ENCODE measurements at regions of chr1 and their contacts with region 1.

Region 1: DNA sequence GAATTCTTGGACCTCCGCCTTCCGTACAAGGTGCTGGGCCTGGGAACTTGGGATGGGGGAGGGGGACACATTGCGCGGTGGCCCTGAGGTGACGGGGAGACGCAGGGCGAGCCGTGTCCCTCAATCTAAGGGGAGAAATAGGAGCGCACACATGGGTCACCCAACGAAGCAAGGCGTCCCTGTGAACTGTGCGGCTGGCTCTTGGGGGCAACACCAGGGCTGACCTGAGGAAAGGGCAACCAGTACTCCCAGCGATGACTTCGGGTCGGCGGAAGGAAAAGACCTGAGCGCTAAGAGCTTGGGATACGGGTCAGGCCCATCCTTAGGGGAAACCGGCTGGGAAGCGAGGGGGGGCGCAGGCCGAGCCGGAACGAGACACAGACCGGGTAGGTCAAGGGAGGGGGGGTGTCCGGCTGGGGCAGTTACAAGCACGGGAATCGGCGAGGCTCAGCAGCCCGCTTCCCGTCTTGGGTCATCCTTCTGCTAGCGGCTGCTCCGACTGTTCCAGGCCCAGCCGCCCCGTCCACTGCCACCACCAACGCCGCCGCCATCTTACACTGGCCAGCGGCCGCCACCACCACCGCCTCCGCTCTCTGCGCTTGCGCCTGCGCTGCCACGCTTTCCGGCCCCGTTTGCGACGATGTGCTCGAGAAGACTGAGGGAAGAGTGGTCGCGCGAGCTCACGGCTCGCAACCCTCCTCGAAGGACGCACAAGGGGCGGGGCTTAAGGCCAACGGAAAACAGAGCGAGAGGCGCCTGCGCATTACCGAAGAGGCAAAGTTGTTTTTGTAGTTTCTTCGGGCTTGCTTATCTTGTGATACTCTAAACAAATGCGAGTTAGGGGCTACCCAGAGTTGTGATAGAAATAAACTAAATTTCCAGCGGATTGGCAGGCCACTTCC is at the start of gene DCAF8:
- DNase-seq: peak; percentile 99
- H3K4me3 Mint-ChIP-seq: peak within 1 kb of the TSS; percentile 98
- H3K27ac Mint-ChIP-seq: peak within 1 kb of the TSS; percentile 100
- H3K4me1 Mint-ChIP-seq: peaks cover 49% of the 10 kb centered on the region
- H3K27me3 Mint-ChIP-seq: no peaks in the 10 kb centered on the region
- total RNA-seq, gene DCAF8: 218 to 226 TPM

Region 2: GRCh38 chr1:159009704-159010361 is 1252.3 kb before region 1 on chr1 and contains the start of gene IFI16:
- CTCF ChIA-PET with region 1: no interaction called
- intact Hi-C with region 1: loop called (anchors 5 kb)
- DNase-seq: peak; percentile 82
- H3K4me3 Mint-ChIP-seq: peak within 1 kb of the TSS; percentile 91
- H3K27ac Mint-ChIP-seq: peak within 1 kb of the TSS; percentile 99
- H3K4me1 Mint-ChIP-seq: peaks cover 39% of the 10 kb centered on the region
- H3K27me3 Mint-ChIP-seq: no peaks in the 10 kb centered on the region
- total RNA-seq, gene IFI16: 287 to 288 TPM

Region 3: DNA sequence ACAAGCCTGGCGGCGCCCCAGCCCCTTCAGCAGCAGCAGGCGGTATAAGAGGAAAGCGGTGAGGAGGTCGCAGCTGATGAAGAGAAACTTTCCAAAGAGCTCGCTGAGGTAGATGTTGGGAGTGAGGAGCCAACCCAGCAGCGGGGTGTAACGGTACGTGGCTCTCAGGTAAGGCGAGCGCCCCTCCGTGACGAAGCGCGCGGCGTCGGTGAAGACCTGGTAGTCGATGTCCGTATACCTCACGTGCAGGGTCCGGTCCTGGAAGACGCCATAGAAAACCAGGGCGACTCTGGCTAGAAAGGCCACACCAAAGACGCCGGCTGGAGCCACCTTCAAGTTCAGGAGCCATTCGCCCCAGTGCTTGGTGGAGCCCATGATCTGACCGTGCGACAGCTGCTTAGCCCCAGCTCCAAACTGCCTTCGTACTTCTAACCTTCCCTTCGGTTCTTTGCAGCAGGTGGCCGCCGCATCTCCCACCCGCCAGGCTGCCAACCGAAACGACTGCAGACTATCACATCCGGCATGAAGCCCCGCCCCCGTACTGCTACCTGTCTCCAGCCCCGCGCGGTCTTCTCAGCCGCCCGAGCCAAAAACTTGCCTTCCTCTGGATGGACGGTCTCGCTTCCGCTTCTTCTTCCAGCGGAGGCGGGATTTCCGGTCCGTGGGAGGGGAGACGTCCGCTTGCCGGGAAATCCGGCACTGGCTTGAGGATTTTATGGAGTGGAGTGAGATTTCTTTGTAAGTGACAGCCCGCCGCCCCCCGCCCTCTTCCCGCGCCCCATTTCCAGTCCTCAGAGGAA is 230.6 kb before region 1 on chr1 and contains the start of gene PIGM:
- CTCF ChIA-PET with region 1: no interaction called
- intact Hi-C with region 1: loop called (anchors 5 kb)
- DNase-seq: peak; percentile 98
- H3K4me3 Mint-ChIP-seq: peak within 1 kb of the TSS; percentile 93
- H3K27ac Mint-ChIP-seq: peak within 1 kb of the TSS; percentile 87
- H3K4me1 Mint-ChIP-seq: peaks cover 25% of the 10 kb centered on the region
- H3K27me3 Mint-ChIP-seq: no peaks in the 10 kb centered on the region
- total RNA-seq, gene PIGM: 2.6 TPM

Region 4: GRCh38 chr1:160251687-160252526 is 10.2 kb before region 1 on chr1:
- CTCF ChIA-PET with region 1: interaction called, 26 read pairs
- intact Hi-C with region 1: no loop called
- DNase-seq: peak; percentile 73
- H3K4me3 Mint-ChIP-seq: no peak overlapping the region
- H3K27ac Mint-ChIP-seq: no peak overlapping the region
- H3K4me1 Mint-ChIP-seq: peaks cover 22% of the 10 kb centered on the region
- H3K27me3 Mint-ChIP-seq: no peaks in the 10 kb centered on the region

Region 5: GRCh38 chr1:160342953-160343869 is 81.1 kb after region 1 on chr1 and contains the starts of genes COPA and NCSTN:
- CTCF ChIA-PET with region 1: no interaction called
- intact Hi-C with region 1: loop called (anchors 1 kb)
- DNase-seq: peak; percentile 95
- H3K4me3 Mint-ChIP-seq: peak within 1 kb of the TSS; percentile 99
- H3K27ac Mint-ChIP-seq: peak within 1 kb of the TSS; percentile 98
- H3K4me1 Mint-ChIP-seq: peaks cover 43% of the 10 kb centered on the region
- H3K27me3 Mint-ChIP-seq: no peaks in the 10 kb centered on the region
- total RNA-seq, gene COPA: 97.8 to 101 TPM
- total RNA-seq, gene NCSTN: 27.4 to 29.4 TPM

Region 6: GRCh38 chr1:160474392-160475242 is 212.5 kb after region 1 on chr1:
- CTCF ChIA-PET with region 1: no interaction called
- intact Hi-C with region 1: loop called (anchors 5 kb)
- DNase-seq: peak; percentile 49
- H3K4me3 Mint-ChIP-seq: no peak overlapping the region
- H3K27ac Mint-ChIP-seq: no peak overlapping the region
- H3K4me1 Mint-ChIP-seq: no peaks in the 10 kb centered on the region
- H3K27me3 Mint-ChIP-seq: no peaks in the 10 kb centered on the region

Region 7: GRCh38 chr1:160618763-160619274 is 356.7 kb after region 1 on chr1:
- CTCF ChIA-PET with region 1: no interaction called
- intact Hi-C with region 1: loop called (anchors 5 kb)
- DNase-seq: peak; percentile 70
- H3K4me3 Mint-ChIP-seq: no peak overlapping the region
- H3K27ac Mint-ChIP-seq: peak overlapping the region; percentile 61
- H3K4me1 Mint-ChIP-seq: peaks cover 57% of the 10 kb centered on the region
- H3K27me3 Mint-ChIP-seq: no peaks in the 10 kb centered on the region